ENCODE measurements at regions of chr3 and their contacts with region 1.

Region 1: GRCh38 chr3:6799264-6799915 is 61.5 kb upstream of the GRM7 start:
- DNase-seq: peak; percentile 60
- H3K4me3 ChIP-seq: no peak overlapping the region
- H3K27ac ChIP-seq: no peak overlapping the region
- H3K4me1 ChIP-seq: no peaks in the 10 kb centered on the region
- H3K27me3 ChIP-seq: no peaks in the 10 kb centered on the region

Region 2: DNA sequence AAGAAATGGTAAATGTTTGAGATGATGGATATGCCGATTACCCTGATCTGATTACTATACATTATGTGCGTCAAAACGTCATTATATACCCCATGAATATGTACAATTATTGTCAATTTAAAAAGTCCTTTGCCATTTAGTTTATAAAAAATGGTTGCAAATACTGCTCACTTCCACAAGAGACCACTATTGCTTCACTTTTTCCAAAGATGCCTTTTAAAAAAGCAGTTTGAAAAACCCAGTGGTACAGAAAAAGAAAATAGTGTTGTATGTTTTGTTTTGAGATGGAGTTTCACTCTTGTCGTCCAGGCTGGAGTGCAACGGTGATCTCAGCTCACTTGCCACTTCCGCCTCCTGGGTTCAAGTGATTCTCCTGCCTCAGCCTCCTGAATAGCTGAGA is 1572.6 kb before region 1 on chr3:
- in situ Hi-C with region 1: loop called (anchors 25 kb)
- DNase-seq: peak; percentile 67
- H3K4me3 ChIP-seq: no peak overlapping the region
- H3K27ac ChIP-seq: no peak overlapping the region
- H3K4me1 ChIP-seq: no peaks in the 10 kb centered on the region
- H3K27me3 ChIP-seq: peaks cover 11% of the 10 kb centered on the region; the same call in 1 of the 2 replicates

Measured in GM23248 (cell line).